Activated B cell treated with CpG ODN at 0.5 μM for 24 hours (primary cell): ENCODE measurements at regions of chr13 and their contacts with region 1.

Region 1: GRCh38 chr13:102620516-102620915 is 23.7 kb downstream of the TPP2 start:
- DNase-seq: no peak
- ATAC-seq: no peak
- H3K4me3 Mint-ChIP-seq: no peak overlapping the region
- H3K27ac Mint-ChIP-seq: no peak overlapping the region
- H3K4me1 Mint-ChIP-seq: no peaks in the 10 kb centered on the region
- H3K27me3 Mint-ChIP-seq: no peaks in the 10 kb centered on the region
- CTCF ChIP-seq: no peak

Region 2: GRCh38 chr13:102657630-102658029 is 37.1 kb after region 1 on chr13:
- CTCF ChIA-PET with region 1: no interaction called
- POLR2A ChIA-PET with region 1: no interaction called
- intact Hi-C with region 1: loop called (anchors 5 kb)
- DNase-seq: no peak
- ATAC-seq: no peak
- H3K4me3 Mint-ChIP-seq: no peak overlapping the region
- H3K27ac Mint-ChIP-seq: no peak overlapping the region
- H3K4me1 Mint-ChIP-seq: no peaks in the 10 kb centered on the region
- H3K27me3 Mint-ChIP-seq: no peaks in the 10 kb centered on the region
- CTCF ChIP-seq: no peak

Region 3: DNA sequence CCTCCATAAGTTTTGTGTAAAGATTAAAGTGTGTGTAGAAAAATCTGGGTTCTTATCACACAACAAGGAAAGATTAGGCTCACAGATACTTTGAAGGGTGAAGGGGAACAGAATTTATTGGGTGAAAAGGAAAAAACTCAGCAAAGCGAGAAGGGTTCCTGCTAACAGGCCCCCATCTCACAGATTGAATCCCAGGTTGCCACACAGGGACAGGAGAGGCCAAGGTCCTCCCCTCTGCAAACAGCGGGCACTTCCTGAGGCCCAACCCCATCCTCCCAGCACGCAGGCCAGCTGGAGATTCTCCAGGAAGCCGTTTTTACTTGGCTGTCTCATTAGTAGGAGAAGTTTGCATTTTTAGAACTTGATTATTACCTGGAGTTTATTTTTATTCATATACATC is 210.1 kb after region 1 on chr13:
- CTCF ChIA-PET with region 1: no interaction called
- POLR2A ChIA-PET with region 1: no interaction called
- intact Hi-C with region 1: no loop called
- DNase-seq: no peak
- ATAC-seq: no peak
- H3K4me3 Mint-ChIP-seq: no peak overlapping the region
- H3K27ac Mint-ChIP-seq: no peak overlapping the region
- H3K4me1 Mint-ChIP-seq: no peaks in the 10 kb centered on the region
- H3K27me3 Mint-ChIP-seq: no peaks in the 10 kb centered on the region
- CTCF ChIP-seq: no peak